BJ (cell line): ENCODE measurements at regions of chr12 and their contacts with region 1.

Region 1: DNA sequence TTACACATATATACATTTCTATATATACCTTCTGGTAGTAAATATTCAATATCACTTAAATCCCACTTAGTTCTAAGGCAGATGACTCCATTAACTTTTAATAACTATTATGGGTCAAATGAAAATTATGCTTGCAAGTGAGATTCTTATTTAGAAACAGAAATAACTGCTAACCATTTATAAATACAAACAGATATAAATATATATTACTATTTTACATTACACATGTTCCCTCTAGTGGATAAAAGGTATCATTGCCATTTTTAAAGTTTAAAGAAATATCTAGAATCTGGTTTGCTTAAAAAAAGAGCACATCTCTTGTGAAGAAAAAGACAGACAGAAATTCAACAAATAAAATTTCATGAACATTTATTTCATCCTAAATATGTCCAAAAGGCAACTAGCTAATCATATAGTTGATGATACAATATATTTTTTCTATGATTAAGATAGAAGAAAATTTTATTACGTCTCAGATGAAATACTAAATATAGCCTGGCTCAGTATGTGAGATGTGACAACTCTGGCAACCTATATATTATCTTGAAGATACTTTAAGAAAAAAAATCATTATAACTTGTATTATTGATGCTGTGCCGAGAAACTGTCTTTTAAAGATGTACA is 11.7 kb upstream of the RAD51AP1 start:
- DNase-seq: no peak
- H3K4me3 ChIP-seq: no peak overlapping the region
- H3K27me3 ChIP-seq: no peaks in the 10 kb centered on the region
- CTCF ChIP-seq: peak; percentile 34; the same call in 1 of the 2 replicates

Region 2: GRCh38 chr12:4307593-4308333 is 219.3 kb before region 1 on chr12:
- CTCF ChIA-PET with region 1: interaction called, 19 read pairs
- POLR2A ChIA-PET with region 1: no interaction called
- DNase-seq: no peak
- H3K4me3 ChIP-seq: no peak overlapping the region
- H3K27me3 ChIP-seq: peaks cover 10% of the 10 kb centered on the region
- CTCF ChIP-seq: peak; percentile 82

Region 3: GRCh38 chr12:4421590-4422031 is 105.4 kb before region 1 on chr12:
- CTCF ChIA-PET with region 1: interaction called, 48 read pairs
- POLR2A ChIA-PET with region 1: no interaction called
- DNase-seq: no peak
- H3K4me3 ChIP-seq: no peak overlapping the region
- H3K27me3 ChIP-seq: 0 out of 2 replicates have a peak, but pooled peaks cover 5% of the 10 kb centered on the region
- CTCF ChIP-seq: peak; percentile 65

Region 4: GRCh38 chr12:5220835-5221234 is 693.8 kb after region 1 on chr12:
- CTCF ChIA-PET with region 1: no interaction called
- POLR2A ChIA-PET with region 1: no interaction called
- DNase-seq: no peak
- H3K4me3 ChIP-seq: no peak overlapping the region
- H3K27me3 ChIP-seq: no peaks in the 10 kb centered on the region; the same call in 1 of the 2 replicates
- CTCF ChIP-seq: no peak